ENCODE measurements at regions of chr22 and their contacts with region 1.

Region 1: GRCh38 chr22:36065775-36066559 is 37.3 kb upstream of the RBFOX2 start:
- DNase-seq: peak; percentile 71
- ATAC-seq: peak; percentile 85
- H3K4me3 Mint-ChIP-seq: peak overlapping the region; percentile 77
- H3K27ac Mint-ChIP-seq: peak overlapping the region; percentile 75
- H3K4me1 Mint-ChIP-seq: peaks cover 11% of the 10 kb centered on the region
- H3K27me3 Mint-ChIP-seq: peaks cover 18% of the 10 kb centered on the region

Region 2: DNA sequence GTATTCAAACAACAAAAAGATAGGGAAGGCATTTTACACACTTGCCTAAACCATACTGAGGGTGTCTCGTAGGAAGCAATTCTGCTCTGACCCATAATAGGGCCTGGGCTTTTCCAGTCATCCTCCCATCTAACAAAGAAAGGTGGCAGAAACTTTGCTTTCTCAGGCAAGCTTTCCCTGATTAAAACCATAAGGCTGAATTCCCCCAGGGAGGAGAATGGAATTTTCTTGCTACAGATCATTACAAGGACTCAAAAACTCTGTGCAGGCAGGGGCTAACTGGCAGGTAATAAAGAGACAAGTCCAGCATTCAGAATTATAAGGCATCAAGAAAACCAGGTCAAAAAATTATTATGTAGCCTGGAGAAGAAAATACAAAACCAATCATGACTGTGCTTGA is 127.7 kb before region 1 on chr22:
- CTCF ChIA-PET with region 1: interaction called, 18 read pairs
- POLR2A ChIA-PET with region 1: no interaction called
- DNase-seq: no peak
- ATAC-seq: no peak
- H3K4me3 Mint-ChIP-seq: no peak overlapping the region
- H3K27ac Mint-ChIP-seq: no peak overlapping the region
- H3K4me1 Mint-ChIP-seq: no peaks in the 10 kb centered on the region
- H3K27me3 Mint-ChIP-seq: peaks cover 12% of the 10 kb centered on the region

Region 3: DNA sequence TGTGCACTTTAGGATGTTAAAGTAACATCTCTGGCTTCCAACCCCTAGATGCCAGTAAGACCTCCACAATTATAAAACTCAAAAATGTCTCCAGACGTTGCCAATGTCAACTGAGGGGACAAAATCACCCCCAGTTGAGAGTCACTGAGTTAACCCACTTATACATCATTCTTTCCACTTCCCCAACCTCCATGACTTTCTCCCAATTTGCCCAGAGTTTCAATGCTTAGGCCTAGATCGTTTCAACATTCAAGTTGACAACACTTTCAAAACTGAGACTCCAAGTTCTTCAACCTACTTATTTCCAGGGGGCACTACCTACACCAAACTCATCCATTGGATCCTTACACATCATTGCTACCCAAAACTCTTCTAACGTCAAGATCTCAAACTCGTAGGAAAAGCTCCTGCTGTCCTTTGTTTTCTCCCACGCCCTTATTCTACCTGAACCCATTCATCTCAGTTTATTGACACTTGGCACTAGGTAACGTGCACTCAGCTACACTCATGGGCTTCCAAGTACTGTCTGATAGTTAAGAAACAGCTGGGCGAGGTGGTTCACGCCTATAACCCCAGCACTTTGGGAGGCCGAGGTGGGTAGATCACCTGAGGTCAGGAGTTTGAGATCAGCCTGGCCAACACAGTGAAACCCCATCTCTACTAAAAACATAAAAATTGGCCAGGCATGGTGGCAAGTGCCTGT is 61.8 kb before region 1 on chr22:
- CTCF ChIA-PET with region 1: interaction called, 11 read pairs
- POLR2A ChIA-PET with region 1: interaction called, 3 read pairs
- DNase-seq: no peak
- ATAC-seq: no peak
- H3K4me3 Mint-ChIP-seq: no peak overlapping the region
- H3K27ac Mint-ChIP-seq: no peak overlapping the region
- H3K4me1 Mint-ChIP-seq: no peaks in the 10 kb centered on the region
- H3K27me3 Mint-ChIP-seq: peaks cover 21% of the 10 kb centered on the region

Region 4: GRCh38 chr22:36032611-36033010 is 33.4 kb before region 1 on chr22:
- CTCF ChIA-PET with region 1: interaction called, 14 read pairs
- POLR2A ChIA-PET with region 1: no interaction called
- DNase-seq: no peak
- ATAC-seq: no peak
- H3K4me3 Mint-ChIP-seq: no peak overlapping the region
- H3K27ac Mint-ChIP-seq: no peak overlapping the region
- H3K4me1 Mint-ChIP-seq: peaks cover 12% of the 10 kb centered on the region
- H3K27me3 Mint-ChIP-seq: peaks cover 37% of the 10 kb centered on the region

Region 5: GRCh38 chr22:36088292-36088691 is 22.3 kb after region 1 on chr22:
- CTCF ChIA-PET with region 1: interaction called, 20 read pairs
- POLR2A ChIA-PET with region 1: interaction called, 3 read pairs
- DNase-seq: no peak
- ATAC-seq: no peak
- H3K4me3 Mint-ChIP-seq: no peak overlapping the region
- H3K27ac Mint-ChIP-seq: no peak overlapping the region
- H3K4me1 Mint-ChIP-seq: peaks cover 1% of the 10 kb centered on the region
- H3K27me3 Mint-ChIP-seq: no peaks in the 10 kb centered on the region

Region 6: GRCh38 chr22:36136475-36136874 is 70.5 kb after region 1 on chr22:
- CTCF ChIA-PET with region 1: interaction called, 15 read pairs
- POLR2A ChIA-PET with region 1: no interaction called
- DNase-seq: no peak
- ATAC-seq: no peak
- H3K4me3 Mint-ChIP-seq: no peak overlapping the region
- H3K27ac Mint-ChIP-seq: no peak overlapping the region
- H3K4me1 Mint-ChIP-seq: peaks cover 8% of the 10 kb centered on the region
- H3K27me3 Mint-ChIP-seq: no peaks in the 10 kb centered on the region

Region 7: GRCh38 chr22:36239401-36240171 is 173.6 kb after region 1 on chr22 and contains the start of gene APOL2:
- CTCF ChIA-PET with region 1: interaction called, 16 read pairs
- POLR2A ChIA-PET with region 1: no interaction called
- DNase-seq: peak; percentile 92
- ATAC-seq: peak; percentile 98
- H3K4me3 Mint-ChIP-seq: peak within 1 kb of the TSS; percentile 89
- H3K27ac Mint-ChIP-seq: peak within 1 kb of the TSS; percentile 92
- H3K4me1 Mint-ChIP-seq: peaks cover 41% of the 10 kb centered on the region
- H3K27me3 Mint-ChIP-seq: peaks cover 2% of the 10 kb centered on the region
- total RNA-seq, gene APOL2: 62.4 TPM